ENCODE measurements at regions of chr4 and their contacts with region 1.

Region 1: GRCh38 chr4:101419324-101420135 is 72.2 kb upstream of the PPP3CA start:
- DNase-seq: peak; percentile 89
- ATAC-seq: peak; percentile 88
- H3K4me3 ChIP-seq: no peak overlapping the region
- H3K27ac ChIP-seq: peak overlapping the region; percentile 77
- H3K4me1 ChIP-seq: peaks cover 26% of the 10 kb centered on the region
- H3K27me3 ChIP-seq: no peaks in the 10 kb centered on the region
- CTCF ChIP-seq: no peak

Region 2: GRCh38 chr4:101708640-101709039 is 289.1 kb after region 1 on chr4:
- CTCF ChIA-PET with region 1: no interaction called
- POLR2A ChIA-PET with region 1: no interaction called
- intact Hi-C with region 1: loop called (anchors 10 kb)
- DNase-seq: peak; percentile 73
- ATAC-seq: peak; percentile 76
- H3K4me3 ChIP-seq: no peak overlapping the region
- H3K27ac ChIP-seq: peak overlapping the region; percentile 48
- H3K4me1 ChIP-seq: peaks cover 17% of the 10 kb centered on the region
- H3K27me3 ChIP-seq: no peaks in the 10 kb centered on the region
- CTCF ChIP-seq: no peak